ENCODE measurements at regions of chr10 and their contacts with region 1.

Region 1: GRCh38 chr10:91797874-91798648 is at the start of gene TNKS2:
- DNase-seq: peak; percentile 90
- H3K4me3 ChIP-seq: peak within 1 kb of the TSS; percentile 87 to 99
- H3K27ac ChIP-seq: peak within 1 kb of the TSS; percentile 90 to 98
- H3K4me1 ChIP-seq: no peaks in the 10 kb centered on the region
- H3K27me3 ChIP-seq: no peaks in the 10 kb centered on the region
- CTCF ChIP-seq: peak in 2 of 4 experiments; percentile 13 to 23
- POLR2A ChIP-seq: peak; percentile 95
- total RNA-seq, gene TNKS2: 38.5 to 43.2 TPM

Region 2: DNA sequence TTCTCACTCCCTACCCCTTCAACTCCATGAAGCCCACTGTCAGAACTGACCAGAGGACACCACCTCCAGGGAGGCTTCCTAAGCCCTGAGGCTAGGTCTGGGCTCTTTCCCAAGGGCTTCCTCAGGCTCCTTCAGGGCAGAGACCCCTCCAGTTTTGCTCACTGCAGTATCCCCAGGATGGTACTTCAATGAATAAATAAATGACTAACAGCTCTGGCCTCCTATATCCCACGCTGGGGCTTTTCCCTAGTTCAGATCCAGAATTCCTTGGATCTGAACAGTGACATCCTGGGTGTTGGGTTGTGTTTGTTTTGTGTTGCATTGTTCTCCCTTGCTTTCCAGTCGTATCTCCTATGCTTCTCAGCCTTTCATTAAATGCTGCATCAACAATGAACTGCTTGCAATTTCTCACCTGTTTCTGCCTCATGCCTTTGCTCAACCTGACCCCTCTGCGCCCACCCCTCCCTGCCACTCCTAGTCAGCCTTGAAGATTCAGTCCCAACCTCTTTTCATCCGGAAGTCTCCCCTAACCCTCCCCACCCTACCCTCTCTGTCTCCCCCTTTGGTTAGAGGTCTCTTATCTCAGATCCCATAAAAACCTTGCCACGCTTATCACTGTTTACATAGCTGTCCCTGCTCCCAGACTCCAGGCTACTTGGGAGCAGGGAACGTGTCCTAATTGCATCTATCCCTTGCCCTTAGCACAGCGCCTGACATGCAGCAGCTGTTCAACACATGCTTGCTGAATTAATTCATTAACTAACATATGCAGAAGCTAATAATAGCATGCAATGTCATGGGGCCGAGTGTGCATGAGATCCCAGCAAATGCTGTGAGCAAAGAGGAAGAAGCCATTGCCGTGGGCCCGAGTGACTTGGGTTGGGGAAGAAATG is 206.9 kb before region 1 on chr10:
- intact Hi-C with region 1: no loop called
- DNase-seq: no peak
- H3K4me3 ChIP-seq: no peak overlapping the region
- H3K27ac ChIP-seq: peak overlapping the region; percentile 62 to 68
- H3K4me1 ChIP-seq: peaks cover 5% of the 10 kb centered on the region
- H3K27me3 ChIP-seq: no peaks in the 10 kb centered on the region
- CTCF ChIP-seq: no peak
- POLR2A ChIP-seq: no peak

Region 3: DNA sequence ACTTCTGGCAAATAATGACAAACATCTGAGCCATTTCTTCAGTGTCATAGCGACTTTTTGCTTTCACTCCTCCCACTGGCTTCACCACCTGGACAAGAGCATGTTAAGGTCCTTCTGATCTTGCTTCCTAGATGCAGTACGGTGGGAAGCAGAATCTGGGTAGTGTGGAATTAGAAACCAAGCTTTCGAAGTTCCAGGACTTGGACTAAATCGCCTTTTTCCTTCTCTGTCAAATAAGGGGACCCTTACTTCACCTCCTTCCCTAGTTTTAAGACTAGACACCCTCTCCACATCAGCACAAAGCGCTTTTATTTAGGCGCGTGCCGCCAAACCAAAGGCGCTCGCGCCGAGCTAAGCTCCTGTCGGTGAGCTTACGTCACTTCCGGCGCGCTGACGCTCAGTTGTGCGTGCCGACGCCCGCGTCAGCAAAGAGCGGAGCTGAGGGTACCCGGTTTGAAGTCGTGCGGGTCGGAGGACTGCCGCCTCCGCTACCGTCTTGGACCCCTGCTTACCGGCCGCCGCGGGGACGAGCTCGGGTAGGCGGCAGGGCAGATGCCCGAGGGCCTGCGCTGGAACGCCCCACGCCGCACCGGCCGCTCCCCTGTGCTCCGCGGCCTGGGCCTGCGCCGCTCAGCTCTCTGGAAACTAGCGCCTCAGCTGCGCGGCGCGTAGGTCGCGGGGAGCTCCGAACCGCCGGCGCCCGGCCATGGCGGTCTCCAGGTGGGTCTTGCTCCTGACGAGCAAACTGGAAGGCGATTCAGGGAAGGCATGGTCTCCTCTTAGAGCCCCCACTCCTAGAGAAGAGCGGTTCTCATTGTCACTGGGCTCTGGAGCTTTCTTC is 125.5 kb after region 1 on chr10 and contains the start of gene BTAF1:
- intact Hi-C with region 1: loop called (anchors 10 kb)
- DNase-seq: peak; percentile 92
- H3K4me3 ChIP-seq: peak within 1 kb of the TSS; percentile 74 to 85
- H3K27ac ChIP-seq: peak within 1 kb of the TSS; percentile 96 to 98
- H3K4me1 ChIP-seq: no peaks in the 10 kb centered on the region
- H3K27me3 ChIP-seq: no peaks in the 10 kb centered on the region
- CTCF ChIP-seq: peak in 2 of 4 experiments; percentile 13 to 21
- POLR2A ChIP-seq: peak; percentile 92
- total RNA-seq, gene BTAF1: 31.2 to 43.2 TPM